H1 (cell line): ENCODE measurements at regions of chr15 and their contacts with region 1.

Region 1: GRCh38 chr15:93087825-93088199 is 1.2 kb downstream of the RGMA start:
- DNase-seq: peak; percentile 61 to 84
- H3K4me3 ChIP-seq: peak overlapping the region; percentile 54 to 75 (median 63)
- H3K27ac ChIP-seq: no peak overlapping the region
- H3K4me1 ChIP-seq: peaks cover 0 to 12% (median 1%) of the 10 kb centered on the region in 4 experiments; a peak in 6 of 7 replicates
- H3K27me3 ChIP-seq: peaks cover 11 to 42% (median 37%) of the 10 kb centered on the region in 4 experiments
- CTCF ChIP-seq: peak; percentile 72 to 90 (median 87)
- EP300 ChIP-seq: no peak
- POLR2A ChIP-seq: no peak
- RAD21 ChIP-seq: peak; percentile 90 to 93

Region 2: DNA sequence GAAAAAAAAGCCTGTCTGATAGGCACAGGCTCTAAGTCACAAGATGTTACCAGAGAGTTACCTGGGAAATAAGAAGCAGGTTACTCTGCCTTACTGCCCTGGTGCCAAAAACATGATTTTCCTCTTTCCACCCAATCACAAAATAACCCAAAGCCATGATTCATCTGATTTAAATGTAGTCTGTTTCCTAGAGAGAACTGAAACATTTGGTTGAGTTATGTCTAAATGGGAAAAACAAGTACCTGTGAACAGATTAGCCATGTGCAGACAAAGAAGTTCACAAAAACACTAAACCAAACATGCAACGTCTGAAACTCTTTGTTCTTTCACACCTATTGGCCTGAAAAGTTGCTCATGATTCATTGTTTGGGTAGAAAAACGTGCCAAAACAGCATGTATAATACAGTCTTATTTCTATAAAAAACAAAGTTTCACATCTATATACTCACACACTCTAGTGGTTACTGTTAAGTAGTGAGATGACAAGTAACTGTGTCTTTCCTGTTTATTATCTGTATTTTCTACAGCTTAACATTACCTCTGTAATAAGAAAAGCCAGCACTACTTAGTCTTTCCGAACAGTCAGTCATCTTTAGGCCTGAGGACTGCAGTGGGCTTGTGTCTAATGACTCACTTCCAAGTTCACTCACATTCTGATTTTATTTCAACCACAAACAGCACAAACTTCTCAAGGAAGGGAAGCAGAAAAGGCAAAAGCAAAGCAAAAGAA is 462.4 kb before region 1 on chr15:
- CTCF ChIA-PET with region 1: no interaction called
- POLR2A ChIA-PET with region 1: no interaction called
- DNase-seq: no peak
- H3K4me3 ChIP-seq: no peak overlapping the region
- H3K27ac ChIP-seq: no peak overlapping the region
- H3K4me1 ChIP-seq: peaks cover 0 to 3% (median 0%) of the 10 kb centered on the region in 4 experiments; a peak in 2 of 7 replicates
- H3K27me3 ChIP-seq: no peaks in the 10 kb centered on the region
- CTCF ChIP-seq: no peak
- EP300 ChIP-seq: no peak
- POLR2A ChIP-seq: no peak
- RAD21 ChIP-seq: no peak

Region 3: DNA sequence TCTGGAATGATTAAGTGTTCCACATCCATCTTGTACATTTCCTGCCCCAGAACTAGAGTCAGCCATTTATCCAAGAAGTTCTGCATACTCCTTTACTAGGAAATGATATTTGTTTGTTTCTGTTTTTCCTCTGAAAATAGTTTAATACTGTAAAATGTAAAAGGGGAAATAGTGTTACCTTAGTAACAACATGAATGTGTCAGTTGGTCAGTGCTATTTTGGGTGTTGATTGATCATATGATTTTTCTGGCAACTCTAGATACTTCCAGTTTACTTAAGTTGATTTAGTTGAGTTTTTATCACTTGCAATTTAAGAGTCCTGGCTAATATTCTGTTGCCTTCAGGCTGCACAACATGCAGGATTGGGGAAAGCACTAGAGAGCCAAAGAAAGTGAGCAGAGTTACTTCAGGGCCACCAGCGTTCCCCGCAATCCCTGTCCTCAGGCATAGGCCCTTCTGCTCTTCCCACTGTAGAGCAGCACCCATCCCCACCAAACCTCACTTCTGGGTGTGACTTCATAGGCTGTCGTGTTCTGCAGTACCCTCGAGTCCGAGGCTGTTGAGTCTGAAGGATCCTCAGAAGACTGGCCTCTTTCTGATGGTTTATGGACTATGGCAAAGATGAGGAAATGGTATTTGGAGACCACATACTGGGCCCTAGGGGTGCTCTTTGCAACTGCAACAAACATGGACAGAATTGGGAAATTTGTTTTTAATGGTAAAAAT is 118.7 kb before region 1 on chr15:
- CTCF ChIA-PET with region 1: no interaction called
- POLR2A ChIA-PET with region 1: no interaction called
- DNase-seq: no peak
- H3K4me3 ChIP-seq: no peak overlapping the region
- H3K27ac ChIP-seq: no peak overlapping the region
- H3K4me1 ChIP-seq: no peaks in the 10 kb centered on the region
- H3K27me3 ChIP-seq: no peaks in the 10 kb centered on the region
- CTCF ChIP-seq: peak in 1 of 3 experiments; percentile 4; a peak in 1 of 4 replicates
- EP300 ChIP-seq: no peak
- POLR2A ChIP-seq: 0 out of 3 replicates have a peak, but pooled peaks of 1 of the 2 experiments have one; percentile 11
- RAD21 ChIP-seq: no peak

Region 4: DNA sequence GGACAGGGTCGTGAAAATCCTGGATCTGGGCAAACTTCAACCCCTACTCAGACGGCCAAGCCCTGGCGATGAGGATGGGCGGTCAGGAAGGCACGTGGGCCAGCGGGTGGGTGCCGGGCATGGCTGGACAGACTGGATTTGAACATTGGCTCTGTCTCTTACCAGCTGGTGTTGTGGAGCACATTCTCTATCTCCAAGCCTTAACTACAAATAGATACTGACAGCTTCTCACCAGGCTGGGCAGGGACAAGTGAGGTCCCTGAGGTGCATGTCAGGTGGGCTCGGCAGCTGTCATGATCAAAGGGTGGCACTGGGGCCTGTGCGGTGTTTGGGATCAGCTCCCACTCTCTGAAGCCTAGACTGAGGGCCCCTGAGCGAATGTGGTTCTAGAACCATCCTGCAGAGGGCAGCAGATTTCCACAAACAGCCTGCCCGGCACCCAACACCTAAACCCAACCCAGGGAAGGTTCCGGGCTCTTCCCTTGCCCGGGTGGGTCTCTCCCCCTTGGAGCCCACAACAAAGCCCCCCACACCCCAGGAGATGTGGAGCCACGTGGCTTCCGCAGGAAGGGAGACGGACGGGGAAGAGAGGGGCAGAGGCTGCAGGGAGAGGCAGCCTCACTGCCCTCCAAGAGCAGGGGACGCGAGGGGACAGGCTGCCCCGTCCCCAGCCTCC is 57.2 kb before region 1 on chr15:
- CTCF ChIA-PET with region 1: interaction called, 22 read pairs
- POLR2A ChIA-PET with region 1: no interaction called
- DNase-seq: peak; percentile 56 to 90
- H3K4me3 ChIP-seq: no peak overlapping the region
- H3K27ac ChIP-seq: no peak overlapping the region
- H3K4me1 ChIP-seq: peaks cover 0 to 3% (median 0%) of the 10 kb centered on the region in 4 experiments; a peak in 3 of 7 replicates
- H3K27me3 ChIP-seq: no peaks in the 10 kb centered on the region
- CTCF ChIP-seq: peak; percentile 84 to 91 (median 85)
- EP300 ChIP-seq: no peak
- POLR2A ChIP-seq: no peak
- RAD21 ChIP-seq: peak; percentile 97

Region 5: DNA sequence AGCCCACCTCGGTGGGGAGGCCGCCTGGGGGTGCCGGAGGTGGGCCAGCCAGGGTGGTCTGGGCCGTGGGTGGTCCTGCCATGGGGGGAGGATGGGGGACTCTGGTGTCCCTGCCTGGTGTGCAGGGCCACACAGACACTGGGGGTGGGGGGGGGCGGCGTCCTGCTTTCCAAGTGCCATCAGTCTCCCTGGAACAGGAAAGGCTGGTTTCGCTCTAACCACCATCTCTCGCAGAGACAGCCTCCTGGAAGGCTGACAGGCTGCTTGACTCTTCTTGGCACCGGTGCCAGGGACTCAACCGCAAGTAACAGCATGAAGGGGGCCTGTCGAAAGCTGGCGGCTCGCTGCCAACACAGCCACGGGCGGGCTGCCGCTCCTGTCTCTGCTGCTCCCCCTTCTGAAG is 39.1 kb before region 1 on chr15:
- CTCF ChIA-PET with region 1: interaction called, 32 read pairs
- POLR2A ChIA-PET with region 1: interaction called, 3 read pairs
- DNase-seq: no peak
- H3K4me3 ChIP-seq: no peak overlapping the region
- H3K27ac ChIP-seq: no peak overlapping the region
- H3K4me1 ChIP-seq: no peaks in the 10 kb centered on the region; a peak in 1 of 7 replicates
- H3K27me3 ChIP-seq: no peaks in the 10 kb centered on the region
- CTCF ChIP-seq: no peak
- EP300 ChIP-seq: no peak
- POLR2A ChIP-seq: no peak
- RAD21 ChIP-seq: no peak

Region 6: GRCh38 chr15:93072411-93073394 is 15.1 kb before region 1 on chr15:
- CTCF ChIA-PET with region 1: interaction called, 41 read pairs
- POLR2A ChIA-PET with region 1: interaction called, 6 read pairs
- DNase-seq: peak in 1 of 2 experiments; percentile 86
- H3K4me3 ChIP-seq: peak overlapping the region; percentile 66 to 94 (median 88)
- H3K27ac ChIP-seq: peak overlapping the region; percentile 74; the same call in 1 of the 2 replicates
- H3K4me1 ChIP-seq: peaks cover 10 to 36% (median 23%) of the 10 kb centered on the region in 4 experiments
- H3K27me3 ChIP-seq: peaks cover 0 to 8% (median 7%) of the 10 kb centered on the region in 4 experiments; a peak in 5 of 7 replicates
- CTCF ChIP-seq: no peak
- EP300 ChIP-seq: no peak
- POLR2A ChIP-seq: peak in 1 of 2 experiments; percentile 57; a peak in 1 of 3 replicates
- RAD21 ChIP-seq: no peak

Region 7: GRCh38 chr15:93331545-93332167 is 243.8 kb after region 1 on chr15:
- CTCF ChIA-PET with region 1: interaction called, 22 read pairs
- POLR2A ChIA-PET with region 1: interaction called, 6 read pairs
- DNase-seq: peak; percentile 59 to 69
- H3K4me3 ChIP-seq: peak overlapping the region; percentile 21 to 53 (median 33); a peak in 6 of 8 replicates
- H3K27ac ChIP-seq: no peak overlapping the region
- H3K4me1 ChIP-seq: peaks cover 8 to 23% (median 20%) of the 10 kb centered on the region in 4 experiments
- H3K27me3 ChIP-seq: peaks cover 5 to 44% (median 31%) of the 10 kb centered on the region in 4 experiments
- CTCF ChIP-seq: no peak
- EP300 ChIP-seq: peak in 1 of 2 experiments; percentile 66; a peak in 1 of 3 replicates
- POLR2A ChIP-seq: no peak
- RAD21 ChIP-seq: peak; percentile 11 to 34; a peak in 2 of 4 replicates